Sigmoid colon (tissue), 7 donors: ENCODE measurements at regions of chrX and their contacts with region 1.

Region 1: GRCh38 chrX:120477453-120477852 is 8.4 kb upstream of the LAMP2 start:
- DNase-seq: no peak
- H3K4me3 ChIP-seq: no peak overlapping the region
- H3K27ac ChIP-seq: no peak overlapping the region
- H3K4me1 ChIP-seq: no peaks in the 10 kb centered on the region
- H3K27me3 ChIP-seq: no peaks in the 10 kb centered on the region
- CTCF ChIP-seq: no peak
- EP300 ChIP-seq: no peak
- POLR2A ChIP-seq: no peak

Region 2: GRCh38 chrX:119606280-119607015 is 871.0 kb before region 1 on chrX and contains the start of gene NKRF:
- intact Hi-C with region 1: no loop called
- DNase-seq: peak; percentile 97
- H3K4me3 ChIP-seq: peak within 1 kb of the TSS; percentile 71 to 75 (median 74)
- H3K27ac ChIP-seq: peak within 1 kb of the TSS; percentile 82 to 94 (median 87)
- H3K4me1 ChIP-seq: peaks cover 0 to 5% (median 0%) of the 10 kb centered on the region in 4 donors
- H3K27me3 ChIP-seq: no peaks in the 10 kb centered on the region
- CTCF ChIP-seq: no peak
- EP300 ChIP-seq: no peak
- POLR2A ChIP-seq: peak; percentile 83
- total RNA-seq, gene NKRF: 4.8 to 6.1 (median 5.0) TPM

Region 3: GRCh38 chrX:120308959-120309872 is 168.2 kb before region 1 on chrX:
- intact Hi-C with region 1: loop called (anchors 10 kb)
- DNase-seq: peak; percentile 79
- H3K4me3 ChIP-seq: peak overlapping the region in 3 of 4 donors; percentile 36 to 46 (median 42)
- H3K27ac ChIP-seq: no peak overlapping the region
- H3K4me1 ChIP-seq: peaks cover 0 to 24% (median 18%) of the 10 kb centered on the region in 4 donors
- H3K27me3 ChIP-seq: peaks cover 5 to 25% (median 8%) of the 10 kb centered on the region in 3 donors
- CTCF ChIP-seq: peak in 2 of 4 experiments; percentile 6 to 15
- EP300 ChIP-seq: no peak
- POLR2A ChIP-seq: no peak

Region 4: GRCh38 chrX:120380699-120381098 is 96.8 kb before region 1 on chrX:
- intact Hi-C with region 1: loop called (anchors 5 kb)
- DNase-seq: no peak
- H3K4me3 ChIP-seq: no peak overlapping the region
- H3K27ac ChIP-seq: no peak overlapping the region
- H3K4me1 ChIP-seq: no peaks in the 10 kb centered on the region
- H3K27me3 ChIP-seq: no peaks in the 10 kb centered on the region
- CTCF ChIP-seq: peak in 2 of 4 experiments; percentile 24 to 29
- EP300 ChIP-seq: no peak
- POLR2A ChIP-seq: no peak

Region 5: GRCh38 chrX:120653000-120653399 is 175.5 kb after region 1 on chrX:
- intact Hi-C with region 1: no loop called
- DNase-seq: no peak
- H3K4me3 ChIP-seq: no peak overlapping the region
- H3K27ac ChIP-seq: no peak overlapping the region
- H3K4me1 ChIP-seq: no peaks in the 10 kb centered on the region
- H3K27me3 ChIP-seq: no peaks in the 10 kb centered on the region
- CTCF ChIP-seq: no peak
- EP300 ChIP-seq: no peak
- POLR2A ChIP-seq: no peak